H1 (cell line): ENCODE measurements at regions of chr9 and their contacts with region 1.

Region 1: DNA sequence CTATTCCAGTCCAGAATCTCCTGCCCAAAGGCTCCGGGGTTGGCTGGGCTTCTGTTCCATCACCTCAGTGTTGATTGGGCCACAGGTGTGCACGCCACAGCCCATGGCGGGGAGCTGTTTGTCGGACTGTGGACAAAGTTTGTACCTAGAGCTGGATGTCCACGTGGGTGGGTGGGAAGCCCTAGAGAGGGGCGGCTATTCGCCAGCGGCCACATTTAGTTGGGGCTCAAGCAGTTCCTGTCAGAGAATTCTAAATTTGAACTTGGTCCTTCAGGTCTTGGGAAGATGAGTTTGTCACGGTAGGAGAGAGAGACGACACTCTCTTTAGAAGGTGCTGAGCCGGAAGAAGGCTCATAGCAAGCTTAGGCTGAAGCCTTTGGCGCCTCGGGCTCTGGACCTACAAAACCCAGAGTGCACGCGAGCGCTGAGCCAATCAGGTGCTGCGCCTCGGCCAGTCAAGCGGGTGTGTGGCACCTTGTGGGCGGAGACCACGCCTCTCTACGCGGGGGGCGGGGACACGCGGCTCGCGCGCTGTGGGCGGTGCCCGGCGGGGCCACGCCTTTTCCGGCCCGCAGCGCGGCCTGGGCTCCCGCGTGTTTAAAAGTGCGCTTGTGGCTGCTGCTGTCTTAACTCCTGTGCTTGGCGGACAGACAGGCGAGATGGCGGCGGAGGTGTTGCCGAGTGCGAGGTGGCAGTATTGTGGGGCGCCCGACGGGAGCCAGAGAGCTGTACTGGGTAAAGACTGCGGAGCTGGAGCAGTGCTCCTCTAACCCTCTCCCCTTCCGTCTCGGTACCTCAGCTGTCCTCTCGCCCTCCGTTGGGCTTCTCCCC is at the start of gene POLR1E:
- DNase-seq: peak; percentile 91 to 98
- H3K4me3 ChIP-seq: peak within 1 kb of the TSS; percentile 78 to 90 (median 79)
- H3K27ac ChIP-seq: no peak within 1 kb of the TSS; the same call in 1 of the 2 replicates
- H3K4me1 ChIP-seq: peaks cover 0 to 14% (median 6%) of the 10 kb centered on the region in 4 experiments; a peak in 5 of 7 replicates
- H3K27me3 ChIP-seq: no peaks in the 10 kb centered on the region
- CTCF ChIP-seq: no peak
- EP300 ChIP-seq: no peak
- POLR2A ChIP-seq: peak; percentile 59 to 89
- RAD21 ChIP-seq: no peak
- total RNA-seq, gene POLR1E: 36.9 and 40.0 TPM in 2 replicates

Region 2: GRCh38 chr9:37415011-37415719 is 70.4 kb before region 1 on chr9:
- CTCF ChIA-PET with region 1: no interaction called
- POLR2A ChIA-PET with region 1: no interaction called
- DNase-seq: peak; percentile 77 to 92
- H3K4me3 ChIP-seq: peak overlapping the region in 1 of 4 experiments; percentile 28; a peak in 1 of 8 replicates
- H3K27ac ChIP-seq: peak overlapping the region; percentile 41
- H3K4me1 ChIP-seq: peaks cover 0 to 18% (median 14%) of the 10 kb centered on the region in 4 experiments; a peak in 6 of 7 replicates
- H3K27me3 ChIP-seq: no peaks in the 10 kb centered on the region
- CTCF ChIP-seq: peak; percentile 61 to 78 (median 73)
- EP300 ChIP-seq: no peak
- POLR2A ChIP-seq: 0 out of 3 replicates have a peak, but pooled peaks of 1 of the 2 experiments have one; percentile 39
- RAD21 ChIP-seq: peak; percentile 46 to 58

Region 3: DNA sequence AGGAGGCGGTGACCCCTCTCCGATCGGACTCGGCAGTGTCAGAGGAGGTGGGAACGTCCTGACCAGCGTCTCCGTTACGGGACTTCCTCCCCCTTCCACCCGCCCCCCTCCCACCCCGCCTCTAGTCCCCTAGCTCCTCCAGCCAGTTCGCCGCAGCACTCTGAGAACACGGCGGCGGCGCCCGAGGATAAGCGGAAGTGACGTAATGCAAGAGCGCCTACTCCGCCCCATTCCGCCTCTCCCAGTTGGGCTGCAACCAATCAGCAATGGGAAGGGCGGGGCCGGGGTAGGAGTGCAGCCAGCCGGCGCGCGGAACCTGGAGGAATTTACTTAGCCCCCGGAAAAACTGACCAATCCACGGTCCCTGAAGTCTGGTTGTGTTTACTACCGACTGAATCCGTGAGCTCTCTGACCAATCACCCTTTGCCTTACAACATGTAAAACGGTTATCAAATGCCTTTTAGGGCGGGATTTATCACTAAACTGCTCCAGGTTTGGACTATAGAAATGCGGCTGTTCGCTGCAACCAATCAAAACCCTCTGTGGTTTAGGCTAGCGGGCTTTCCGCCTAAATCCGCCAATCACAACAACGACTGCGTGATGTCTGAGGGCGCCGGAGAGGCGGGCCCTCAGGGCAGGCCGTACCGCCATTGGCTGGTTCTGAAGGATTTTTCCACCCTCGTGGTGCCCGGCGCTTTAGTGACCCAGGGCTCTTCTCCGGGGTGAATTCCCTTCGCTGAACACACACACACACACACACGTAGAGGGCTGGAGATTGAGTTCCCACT is 20.2 kb before region 1 on chr9 and contains the start of gene ZBTB5:
- CTCF ChIA-PET with region 1: interaction called, 3 read pairs
- POLR2A ChIA-PET with region 1: interaction called, 40 read pairs
- DNase-seq: peak; percentile 96 to 98
- H3K4me3 ChIP-seq: peak within 1 kb of the TSS; percentile 69 to 94 (median 87)
- H3K27ac ChIP-seq: peak within 1 kb of the TSS; percentile 98
- H3K4me1 ChIP-seq: peaks cover 0 to 9% (median 4%) of the 10 kb centered on the region in 4 experiments; a peak in 2 of 7 replicates
- H3K27me3 ChIP-seq: no peaks in the 10 kb centered on the region
- CTCF ChIP-seq: no peak
- EP300 ChIP-seq: no peak
- POLR2A ChIP-seq: peak; percentile 52 to 62; a peak in 2 of 3 replicates
- RAD21 ChIP-seq: no peak
- total RNA-seq, gene ZBTB5: 13.6 and 14.5 TPM in 2 replicates

Region 4: DNA sequence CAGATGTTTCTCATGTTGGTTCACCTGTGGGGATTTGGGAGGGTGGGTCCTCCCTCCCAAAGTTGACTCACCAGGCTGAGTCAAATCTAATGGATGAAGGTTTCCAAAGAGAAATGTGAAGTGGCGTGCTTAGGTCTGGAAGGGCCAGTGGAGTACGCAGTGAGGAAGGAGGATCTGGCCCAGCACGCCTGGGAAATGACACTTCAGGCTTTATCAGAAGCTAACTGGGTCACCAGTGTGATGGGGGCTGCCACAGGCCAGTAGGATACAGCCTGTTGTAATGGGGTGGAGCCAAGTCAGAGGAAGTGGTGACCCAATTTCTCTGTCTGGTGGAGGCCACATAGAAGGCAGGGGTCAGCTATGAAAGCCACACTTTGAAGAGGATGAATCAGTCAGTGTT is 18.1 kb after region 1 on chr9:
- CTCF ChIA-PET with region 1: interaction called, 39 read pairs
- POLR2A ChIA-PET with region 1: interaction called, 15 read pairs
- DNase-seq: no peak
- H3K4me3 ChIP-seq: no peak overlapping the region
- H3K27ac ChIP-seq: no peak overlapping the region
- H3K4me1 ChIP-seq: no peaks in the 10 kb centered on the region
- H3K27me3 ChIP-seq: no peaks in the 10 kb centered on the region
- CTCF ChIP-seq: no peak
- EP300 ChIP-seq: no peak
- POLR2A ChIP-seq: no peak
- RAD21 ChIP-seq: no peak

Region 5: GRCh38 chr9:37511016-37512010 is 25.7 kb after region 1 on chr9:
- CTCF ChIA-PET with region 1: interaction called, 39 read pairs
- POLR2A ChIA-PET with region 1: interaction called, 15 read pairs
- DNase-seq: peak; percentile 34 to 72
- H3K4me3 ChIP-seq: no peak overlapping the region
- H3K27ac ChIP-seq: no peak overlapping the region
- H3K4me1 ChIP-seq: no peaks in the 10 kb centered on the region; a peak in 2 of 7 replicates
- H3K27me3 ChIP-seq: no peaks in the 10 kb centered on the region
- CTCF ChIP-seq: peak; percentile 53 to 77 (median 76)
- EP300 ChIP-seq: no peak
- POLR2A ChIP-seq: peak in 1 of 2 experiments; percentile 49; a peak in 1 of 3 replicates
- RAD21 ChIP-seq: peak; percentile 36 to 45; a peak in 3 of 4 replicates

Region 6: GRCh38 chr9:37618817-37619216 is 133.2 kb after region 1 on chr9:
- CTCF ChIA-PET with region 1: no interaction called
- POLR2A ChIA-PET with region 1: no interaction called
- DNase-seq: no peak
- H3K4me3 ChIP-seq: no peak overlapping the region
- H3K27ac ChIP-seq: no peak overlapping the region
- H3K4me1 ChIP-seq: peaks cover 0 to 3% (median under 1%) of the 10 kb centered on the region in 4 experiments; a peak in 3 of 7 replicates
- H3K27me3 ChIP-seq: no peaks in the 10 kb centered on the region
- CTCF ChIP-seq: no peak
- EP300 ChIP-seq: no peak
- POLR2A ChIP-seq: no peak
- RAD21 ChIP-seq: no peak